Heart right ventricle (tissue), 16 donors: ENCODE measurements at regions of chr6 and their contacts with region 1.

Region 1: DNA sequence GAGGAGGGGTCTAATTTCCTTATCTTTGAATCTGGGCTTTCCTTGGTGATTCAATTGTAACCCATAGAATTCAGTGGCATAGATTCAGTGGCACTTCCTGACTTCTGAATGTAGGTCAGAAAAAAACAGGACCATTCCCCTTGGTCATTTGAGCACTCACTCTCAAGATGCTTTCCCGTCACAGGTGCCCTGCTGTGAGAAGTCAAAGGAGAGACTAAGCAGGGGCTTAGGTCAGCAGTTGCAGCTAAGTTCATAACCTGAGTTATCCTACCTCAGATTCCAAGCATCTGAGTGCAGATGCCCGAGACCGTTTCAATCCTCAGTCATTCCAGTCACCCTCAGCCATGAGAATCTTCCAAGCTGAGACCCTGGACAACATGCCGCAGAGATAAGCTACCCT is 506.6 kb downstream of the FRK start:
- DNase-seq: no peak
- ATAC-seq: no peak
- H3K4me3 ChIP-seq: no peak overlapping the region
- H3K27ac ChIP-seq: no peak overlapping the region
- H3K4me1 ChIP-seq: peaks cover 0 to 6% (median 0%) of the 10 kb centered on the region in 9 donors
- H3K27me3 ChIP-seq: no peaks in the 10 kb centered on the region
- CTCF ChIP-seq: no peak

Region 2: DNA sequence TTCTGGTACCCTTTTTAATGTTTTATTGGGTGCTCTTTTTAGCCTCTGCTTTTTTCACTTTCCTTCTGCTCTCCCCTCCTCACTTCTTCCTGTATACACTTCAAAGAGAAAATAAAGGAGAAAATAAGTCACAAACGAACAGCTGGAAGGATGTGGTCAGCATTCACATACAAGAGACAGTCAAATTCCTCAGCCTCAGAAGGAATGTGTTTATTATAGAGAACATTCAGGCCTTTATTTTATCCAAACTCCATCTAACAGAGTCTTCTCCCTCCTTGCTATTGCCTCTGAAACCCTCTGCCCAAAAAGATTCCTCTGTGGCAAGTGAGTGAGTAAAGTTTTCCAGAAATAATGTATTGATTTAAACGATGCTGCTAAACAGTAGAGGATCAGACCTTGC is 16.3 kb after region 1 on chr6:
- intact Hi-C with region 1: loop called in 1 of 10 experiments (anchors 1 kb)
- DNase-seq: no peak
- ATAC-seq: no peak
- H3K4me3 ChIP-seq: no peak overlapping the region
- H3K27ac ChIP-seq: no peak overlapping the region
- H3K4me1 ChIP-seq: no peaks in the 10 kb centered on the region
- H3K27me3 ChIP-seq: no peaks in the 10 kb centered on the region
- CTCF ChIP-seq: no peak